Colonic mucosa (tissue), 4 donors: ENCODE measurements at regions of chr1 and their contacts with region 1.

Region 1: DNA sequence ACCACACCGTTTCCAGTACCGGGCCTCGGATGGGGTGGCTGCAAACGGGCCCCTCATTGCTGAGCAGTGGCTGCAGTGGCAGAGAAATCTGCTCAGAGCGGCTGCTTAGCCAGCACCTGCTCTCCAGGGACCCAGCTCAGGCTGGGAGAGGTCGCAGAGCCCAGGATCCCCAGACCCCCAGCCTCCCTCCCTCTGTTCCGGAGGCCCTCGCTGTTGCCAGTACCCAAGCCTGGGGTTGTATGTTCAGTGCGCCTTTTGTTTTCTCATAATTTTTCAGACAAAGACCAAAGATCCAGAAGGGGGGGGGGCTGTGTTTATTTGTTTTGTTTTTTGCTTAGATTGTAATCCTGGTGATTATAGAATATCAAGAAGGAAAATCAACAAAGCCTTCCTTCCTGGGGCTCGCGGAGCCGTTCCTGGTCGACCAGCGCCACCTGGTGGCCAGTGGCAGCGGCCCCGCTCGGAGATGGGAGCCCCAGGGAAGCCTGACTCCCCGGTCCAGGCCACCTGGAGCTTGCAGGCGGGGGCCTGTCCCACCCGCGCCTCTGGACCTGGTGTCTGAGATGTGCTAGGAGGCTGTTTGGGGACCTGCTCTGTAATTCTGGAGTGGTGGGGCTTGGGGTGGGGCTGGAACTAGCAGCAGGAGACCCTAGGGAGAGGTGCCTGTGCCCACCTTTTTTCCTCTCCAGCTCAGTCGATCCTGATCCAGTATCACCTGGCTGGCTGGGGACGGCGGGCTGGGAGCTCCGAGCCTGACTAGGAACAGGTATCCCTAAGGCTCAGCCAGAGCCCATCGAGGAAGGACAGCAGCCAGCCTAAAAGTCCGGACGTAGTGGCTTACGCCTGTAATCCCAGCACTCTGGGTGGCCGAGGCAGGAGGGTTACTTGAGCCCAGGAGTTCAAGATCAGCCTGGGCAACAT is 123.9 kb upstream of the VAMP3 start:
- DNase-seq: peak; percentile 71
- H3K4me3 ChIP-seq: no peak overlapping the region
- H3K27ac ChIP-seq: no peak overlapping the region
- H3K4me1 ChIP-seq: peaks cover 2% of the 10 kb centered on the region
- H3K27me3 ChIP-seq: no peaks in the 10 kb centered on the region
- CTCF ChIP-seq: peak; percentile 89

Region 2: DNA sequence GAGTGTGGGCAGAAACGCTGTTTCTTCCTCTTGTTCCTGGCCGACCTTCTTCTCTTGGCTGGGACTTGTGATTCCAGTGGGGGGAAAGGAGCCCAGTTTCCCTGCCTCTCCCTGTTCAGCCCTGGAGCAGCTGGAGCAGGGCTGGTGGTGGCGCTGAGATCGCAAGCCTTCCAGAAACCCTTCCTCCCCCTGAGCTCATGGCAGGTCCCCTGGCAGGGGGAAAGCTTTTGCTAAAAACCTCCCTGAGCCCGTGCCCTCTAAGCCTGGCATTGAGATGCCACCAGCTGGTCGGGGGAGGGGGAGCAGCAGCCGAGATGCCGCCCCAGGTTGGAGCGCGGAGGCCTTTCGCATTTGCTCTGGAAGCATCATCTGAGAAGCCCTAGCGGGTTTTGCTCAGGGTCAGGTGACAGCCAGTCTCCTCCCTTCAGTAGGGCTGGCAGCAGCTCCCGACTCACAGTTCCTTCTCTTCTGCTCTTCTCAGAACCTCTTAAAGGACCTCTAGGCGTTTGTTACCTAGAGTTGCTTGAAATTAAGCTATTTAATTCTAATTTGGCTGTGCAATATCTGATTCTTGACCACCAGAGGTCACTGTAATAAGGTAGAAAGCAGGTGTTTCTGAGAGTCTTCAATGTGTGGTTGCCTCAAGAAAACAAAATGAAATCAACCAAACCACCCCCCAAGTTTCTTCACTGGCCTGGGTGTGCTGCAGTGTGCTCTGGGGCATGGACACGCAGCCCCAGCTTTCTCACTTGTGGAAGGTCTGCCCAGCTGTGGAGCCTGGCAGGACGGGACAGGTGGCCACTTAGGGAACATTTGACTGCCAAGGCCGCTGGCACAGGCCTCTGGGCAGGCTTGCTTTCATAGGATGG is 604.7 kb before region 1 on chr1:
- intact Hi-C with region 1: loop called (anchors 5 kb)
- DNase-seq: no peak
- H3K4me3 ChIP-seq: no peak overlapping the region
- H3K27ac ChIP-seq: no peak overlapping the region
- H3K4me1 ChIP-seq: no peaks in the 10 kb centered on the region
- H3K27me3 ChIP-seq: no peaks in the 10 kb centered on the region
- CTCF ChIP-seq: peak; percentile 45

Region 3: DNA sequence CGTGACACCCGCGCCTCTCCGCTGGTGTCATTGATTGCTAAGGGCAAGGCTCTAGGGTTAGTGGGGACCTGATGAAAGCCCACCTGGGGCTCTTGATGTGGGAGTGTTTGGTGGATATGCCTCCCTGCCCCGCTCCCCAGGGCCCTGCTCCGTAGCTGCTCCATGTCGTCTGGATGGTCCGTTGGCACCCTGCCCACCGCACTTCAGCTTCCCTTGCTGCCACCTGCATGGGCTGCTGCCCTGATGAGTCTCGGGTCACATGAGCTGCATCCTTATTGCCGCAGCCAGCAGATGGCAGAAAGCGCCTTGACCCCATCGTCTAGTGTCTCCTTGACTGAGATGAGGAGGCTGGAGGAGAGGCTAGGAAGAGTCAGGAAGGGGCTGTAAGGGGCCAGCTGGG is 422.6 kb before region 1 on chr1:
- intact Hi-C with region 1: loop called (anchors 5 kb)
- DNase-seq: peak; percentile 35
- H3K4me3 ChIP-seq: no peak overlapping the region
- H3K27ac ChIP-seq: no peak overlapping the region
- H3K4me1 ChIP-seq: no peaks in the 10 kb centered on the region
- H3K27me3 ChIP-seq: no peaks in the 10 kb centered on the region
- CTCF ChIP-seq: peak; percentile 17

Region 4: DNA sequence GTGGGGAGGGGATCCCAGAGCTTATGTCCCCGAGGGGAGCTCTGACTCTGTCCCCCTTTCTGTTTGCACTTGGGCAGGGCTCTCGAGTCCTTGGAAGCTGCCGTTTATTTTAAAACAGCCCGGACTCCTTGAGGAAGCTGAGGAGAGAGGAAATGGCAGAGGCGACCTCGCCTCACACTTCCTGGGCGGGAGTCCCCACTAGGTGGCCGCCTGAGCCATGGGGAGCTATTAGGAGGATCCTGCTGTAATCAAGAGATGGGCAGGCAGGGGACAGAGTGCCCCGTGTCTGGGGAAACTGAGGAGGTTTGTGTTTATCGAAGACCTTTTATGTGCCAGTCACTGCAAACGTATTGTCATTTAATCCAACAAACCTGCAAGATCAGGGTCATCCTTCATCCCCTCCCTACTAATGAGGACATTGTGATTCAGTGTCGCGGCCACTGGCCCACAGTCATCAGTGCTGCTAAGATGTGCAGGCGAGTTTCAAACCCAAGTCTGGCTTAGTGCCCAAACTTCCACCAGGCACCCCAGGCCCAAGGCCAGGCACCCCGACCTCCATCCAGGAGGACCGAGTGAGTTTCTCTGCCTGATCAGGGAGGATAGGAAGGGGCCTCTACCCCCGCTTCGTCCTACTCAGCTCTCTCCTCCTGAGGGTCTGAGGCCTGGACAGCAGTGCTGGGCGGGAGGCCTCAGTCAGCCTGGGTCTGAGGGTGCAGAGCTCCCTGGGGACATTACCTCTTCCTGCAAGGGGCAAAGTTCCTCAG is 193.0 kb before region 1 on chr1:
- intact Hi-C with region 1: loop called (anchors 5 kb)
- DNase-seq: peak; percentile 28
- H3K4me3 ChIP-seq: no peak overlapping the region
- H3K27ac ChIP-seq: no peak overlapping the region
- H3K4me1 ChIP-seq: no peaks in the 10 kb centered on the region
- H3K27me3 ChIP-seq: no peaks in the 10 kb centered on the region
- CTCF ChIP-seq: peak; percentile 36

Region 5: DNA sequence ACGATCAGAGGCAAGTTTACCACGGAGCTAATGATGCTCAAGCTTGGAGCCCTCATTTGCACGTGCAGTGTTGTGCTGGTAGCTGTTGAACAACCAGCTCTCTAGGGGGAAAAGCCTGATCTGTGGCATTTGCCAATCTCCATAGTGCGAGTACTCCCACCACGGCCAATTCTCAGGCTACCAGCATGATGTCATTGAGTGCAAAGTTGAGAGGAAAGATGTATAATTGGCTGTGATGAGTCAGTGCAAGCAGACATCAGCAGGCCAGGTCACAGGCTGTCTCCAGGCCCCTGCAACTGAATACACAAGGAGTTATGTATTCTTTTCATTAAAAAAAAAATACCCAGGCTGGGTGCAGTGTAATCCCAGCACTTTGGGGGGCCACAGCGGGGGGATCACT is 109.2 kb before region 1 on chr1:
- intact Hi-C with region 1: no loop called
- DNase-seq: no peak
- H3K4me3 ChIP-seq: no peak overlapping the region
- H3K27ac ChIP-seq: no peak overlapping the region
- H3K4me1 ChIP-seq: no peaks in the 10 kb centered on the region
- H3K27me3 ChIP-seq: no peaks in the 10 kb centered on the region
- CTCF ChIP-seq: no peak

Region 6: DNA sequence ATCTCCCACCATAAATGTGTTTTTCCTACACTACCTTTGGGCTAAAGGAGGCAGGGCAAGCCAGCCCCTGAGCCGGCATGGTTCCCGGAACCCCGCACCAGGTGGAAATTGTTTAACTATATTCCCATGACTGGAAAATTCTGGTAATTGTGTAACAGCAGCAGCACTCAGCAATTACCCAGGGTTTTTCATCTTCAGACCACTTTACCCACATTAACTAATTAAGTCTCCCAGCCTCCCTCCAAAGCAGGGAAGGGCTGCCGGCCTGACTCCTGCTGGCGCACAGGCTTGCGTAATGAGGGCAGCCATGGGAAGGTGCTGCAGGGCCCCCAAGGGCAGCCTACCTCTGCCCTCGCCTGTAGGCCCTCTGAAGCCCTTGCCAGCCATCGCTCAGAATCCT is 16.9 kb before region 1 on chr1:
- intact Hi-C with region 1: no loop called
- DNase-seq: no peak
- H3K4me3 ChIP-seq: no peak overlapping the region
- H3K27ac ChIP-seq: no peak overlapping the region
- H3K4me1 ChIP-seq: no peaks in the 10 kb centered on the region
- H3K27me3 ChIP-seq: no peaks in the 10 kb centered on the region
- CTCF ChIP-seq: no peak